Body of pancreas (tissue), 4 donors: ENCODE measurements at regions of chr10 and their contacts with region 1.

Region 1: DNA sequence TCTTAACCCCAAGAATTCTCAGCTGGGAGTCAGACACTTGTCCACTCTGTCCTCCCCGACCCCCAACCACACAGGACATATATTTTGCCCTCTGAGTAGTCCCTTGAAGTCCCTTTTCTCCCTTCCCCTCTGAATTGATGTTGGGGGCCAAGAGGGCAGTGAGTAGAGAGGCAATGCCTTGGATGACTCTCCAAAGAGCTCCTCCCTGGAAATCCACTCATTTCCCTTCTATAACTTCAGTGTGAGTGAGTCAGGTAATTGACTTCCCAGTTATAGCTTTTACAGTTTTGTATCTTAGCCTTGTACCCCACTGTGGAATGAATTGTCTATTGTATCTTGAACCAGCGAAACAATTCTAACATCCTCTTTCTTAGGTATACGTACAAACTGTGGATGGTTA is 9.2 kb upstream of the ODAD2 start:
- DNase-seq: no peak
- ATAC-seq: no peak
- H3K4me3 ChIP-seq: no peak overlapping the region
- H3K27ac ChIP-seq: no peak overlapping the region
- H3K4me1 ChIP-seq: no peaks in the 10 kb centered on the region
- H3K27me3 ChIP-seq: no peaks in the 10 kb centered on the region
- CTCF ChIP-seq: no peak
- POLR2A ChIP-seq: no peak

Region 2: DNA sequence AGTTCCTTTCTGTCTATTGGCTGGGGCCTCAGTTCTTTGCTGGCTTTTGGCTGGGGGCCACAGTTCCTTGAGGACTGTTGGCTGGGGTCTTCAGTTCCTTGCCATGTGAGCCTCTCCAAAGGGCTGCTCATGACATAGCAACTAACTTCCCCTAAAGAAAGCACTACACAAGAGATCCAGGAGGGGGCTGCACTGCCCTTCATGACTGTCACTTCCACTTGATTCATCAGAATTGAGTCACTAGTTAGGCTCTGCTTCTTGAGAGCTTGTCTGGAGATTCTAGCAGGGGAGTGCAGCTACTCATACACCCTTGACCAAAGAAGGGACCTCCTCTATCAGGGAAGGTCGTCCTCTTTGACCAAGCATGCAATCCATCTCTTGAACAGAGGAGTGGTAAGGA is 224.4 kb before region 1 on chr10:
- intact Hi-C with region 1: loop called (anchors 10 kb)
- DNase-seq: peak in 3 of 4 donors; percentile 21 to 33 (median 27)
- ATAC-seq: no peak
- H3K4me3 ChIP-seq: no peak overlapping the region
- H3K27ac ChIP-seq: no peak overlapping the region
- H3K4me1 ChIP-seq: no peaks in the 10 kb centered on the region
- H3K27me3 ChIP-seq: no peaks in the 10 kb centered on the region
- CTCF ChIP-seq: peak in 3 of 7 experiments; percentile 19 to 55 (median 31)
- POLR2A ChIP-seq: no peak